ENCODE measurements at regions of chr7 and their contacts with region 1.

Region 1: GRCh38 chr7:47513741-47514241 is 68.1 kb downstream of the TNS3 start:
- DNase-seq: no peak
- H3K4me3 ChIP-seq: no peak overlapping the region
- H3K4me3 Mint-ChIP-seq: no peak overlapping the region
- H3K27ac Mint-ChIP-seq: no peak overlapping the region
- H3K4me1 ChIP-seq: peaks cover 57% of the 10 kb centered on the region
- H3K4me1 Mint-ChIP-seq: peaks cover 14% of the 10 kb centered on the region
- H3K27me3 ChIP-seq: no peaks in the 10 kb centered on the region; the same call in 1 of the 2 replicates
- H3K27me3 Mint-ChIP-seq: no peaks in the 10 kb centered on the region
- CTCF ChIP-seq: no peak

Region 2: DNA sequence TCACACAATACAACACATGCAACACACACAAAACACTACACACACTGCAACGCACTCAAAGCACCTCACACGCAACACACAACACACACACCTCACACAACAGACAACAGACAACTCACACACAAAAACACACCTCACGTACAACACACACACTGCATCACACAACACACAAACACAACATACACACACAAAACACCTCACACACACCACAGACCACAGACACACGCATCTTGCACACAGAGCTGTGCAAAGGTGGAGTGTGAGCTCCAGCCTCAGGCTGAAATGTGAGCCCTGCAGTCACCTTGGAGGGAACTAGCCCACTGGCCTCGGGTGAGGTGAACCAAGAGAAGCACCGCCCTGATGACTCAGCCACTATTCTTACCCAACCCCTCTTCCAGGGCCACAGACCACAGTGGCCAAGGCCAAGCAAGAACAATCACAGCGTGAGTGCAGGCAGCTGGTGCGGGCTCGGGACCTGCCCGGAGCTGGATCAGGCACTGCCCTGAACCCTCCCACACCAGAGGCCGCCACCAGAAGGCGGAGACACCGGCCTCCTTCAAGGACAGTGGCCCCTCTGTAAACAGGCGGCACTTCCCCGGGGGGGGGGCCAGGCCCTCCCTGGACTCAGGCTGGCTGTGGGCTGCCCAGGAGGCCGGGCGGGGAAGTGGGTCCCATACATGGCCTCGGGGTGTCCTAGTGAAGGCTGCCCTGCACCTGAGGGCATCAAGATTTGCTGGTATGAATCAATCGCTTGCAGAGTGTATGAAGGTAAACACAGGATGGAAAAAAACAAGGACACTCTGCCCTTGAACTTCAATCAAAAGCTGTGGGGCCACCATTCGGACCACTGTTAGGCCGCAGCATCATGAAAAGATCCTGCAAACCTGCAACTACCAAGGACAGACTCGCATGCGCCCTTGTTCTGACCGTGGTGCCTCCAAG is 38.6 kb before region 1 on chr7:
- CTCF ChIA-PET with region 1: no interaction called
- POLR2A ChIA-PET with region 1: no interaction called
- intact Hi-C with region 1: loop called (anchors 2 kb)
- DNase-seq: peak; percentile 84 to 92
- H3K4me3 ChIP-seq: no peak overlapping the region
- H3K4me3 Mint-ChIP-seq: no peak overlapping the region
- H3K27ac Mint-ChIP-seq: no peak overlapping the region
- H3K4me1 ChIP-seq: peaks cover 63% of the 10 kb centered on the region
- H3K4me1 Mint-ChIP-seq: peaks cover 32% of the 10 kb centered on the region
- H3K27me3 ChIP-seq: no peaks in the 10 kb centered on the region
- H3K27me3 Mint-ChIP-seq: no peaks in the 10 kb centered on the region
- CTCF ChIP-seq: no peak

Region 3: GRCh38 chr7:47536661-47537611 is 23.1 kb after region 1 on chr7:
- CTCF ChIA-PET with region 1: no interaction called
- POLR2A ChIA-PET with region 1: no interaction called
- intact Hi-C with region 1: loop called (anchors 1 kb)
- DNase-seq: no peak
- H3K4me3 ChIP-seq: no peak overlapping the region
- H3K4me3 Mint-ChIP-seq: peak overlapping the region; percentile 55
- H3K27ac Mint-ChIP-seq: peak overlapping the region; percentile 75
- H3K4me1 ChIP-seq: peaks cover 78% of the 10 kb centered on the region
- H3K4me1 Mint-ChIP-seq: peaks cover 54% of the 10 kb centered on the region
- H3K27me3 ChIP-seq: no peaks in the 10 kb centered on the region
- H3K27me3 Mint-ChIP-seq: no peaks in the 10 kb centered on the region
- CTCF ChIP-seq: no peak

Measured in Caco-2 (cell line).